ENCODE measurements at regions of chr5 and their contacts with region 1.

Region 1: GRCh38 chr5:179907570-179908324 is at the start of gene TBC1D9B:
- DNase-seq: peak; percentile 78 to 85
- ATAC-seq: peak; percentile 77 to 87 (median 86)
- H3K4me3 ChIP-seq: peak within 1 kb of the TSS; percentile 73
- H3K27ac ChIP-seq: peak within 1 kb of the TSS; percentile 74
- H3K4me1 ChIP-seq: peaks cover 19% of the 10 kb centered on the region
- H3K27me3 ChIP-seq: no peaks in the 10 kb centered on the region
- CTCF ChIP-seq: peak; percentile 81
- total RNA-seq, gene TBC1D9B: 40.0 to 50.2 (median 41.9) TPM

Region 2: GRCh38 chr5:179355976-179356974 is 551.5 kb before region 1 on chr5:
- intact Hi-C with region 1: no loop called
- DNase-seq: no peak
- ATAC-seq: peak in 1 of 4 donors; percentile 71
- H3K4me3 ChIP-seq: no peak overlapping the region
- H3K27ac ChIP-seq: no peak overlapping the region
- H3K4me1 ChIP-seq: no peaks in the 10 kb centered on the region
- H3K27me3 ChIP-seq: no peaks in the 10 kb centered on the region
- CTCF ChIP-seq: no peak

Region 3: GRCh38 chr5:179763215-179763945 is 144.4 kb before region 1 on chr5:
- intact Hi-C with region 1: loop called in 1 of 2 experiments (anchors 5 kb)
- DNase-seq: peak; percentile 47 to 56
- ATAC-seq: peak; percentile 49 to 78 (median 59)
- H3K4me3 ChIP-seq: no peak overlapping the region
- H3K27ac ChIP-seq: peak overlapping the region; percentile 53
- H3K4me1 ChIP-seq: peaks cover 61% of the 10 kb centered on the region
- H3K27me3 ChIP-seq: no peaks in the 10 kb centered on the region
- CTCF ChIP-seq: peak; percentile 86

Region 4: GRCh38 chr5:179806250-179807222 is 101.2 kb before region 1 on chr5 and contains the start of gene MGAT4B:
- intact Hi-C with region 1: loop called (anchors 5 to 10 kb)
- DNase-seq: peak; percentile 79 to 85
- ATAC-seq: peak; percentile 79 to 85 (median 84)
- H3K4me3 ChIP-seq: peak within 1 kb of the TSS; percentile 97
- H3K27ac ChIP-seq: peak within 1 kb of the TSS; percentile 96
- H3K4me1 ChIP-seq: peaks cover 41% of the 10 kb centered on the region
- H3K27me3 ChIP-seq: no peaks in the 10 kb centered on the region
- CTCF ChIP-seq: no peak
- total RNA-seq, gene MGAT4B: 29.3 to 58.4 (median 50.7) TPM

Region 5: DNA sequence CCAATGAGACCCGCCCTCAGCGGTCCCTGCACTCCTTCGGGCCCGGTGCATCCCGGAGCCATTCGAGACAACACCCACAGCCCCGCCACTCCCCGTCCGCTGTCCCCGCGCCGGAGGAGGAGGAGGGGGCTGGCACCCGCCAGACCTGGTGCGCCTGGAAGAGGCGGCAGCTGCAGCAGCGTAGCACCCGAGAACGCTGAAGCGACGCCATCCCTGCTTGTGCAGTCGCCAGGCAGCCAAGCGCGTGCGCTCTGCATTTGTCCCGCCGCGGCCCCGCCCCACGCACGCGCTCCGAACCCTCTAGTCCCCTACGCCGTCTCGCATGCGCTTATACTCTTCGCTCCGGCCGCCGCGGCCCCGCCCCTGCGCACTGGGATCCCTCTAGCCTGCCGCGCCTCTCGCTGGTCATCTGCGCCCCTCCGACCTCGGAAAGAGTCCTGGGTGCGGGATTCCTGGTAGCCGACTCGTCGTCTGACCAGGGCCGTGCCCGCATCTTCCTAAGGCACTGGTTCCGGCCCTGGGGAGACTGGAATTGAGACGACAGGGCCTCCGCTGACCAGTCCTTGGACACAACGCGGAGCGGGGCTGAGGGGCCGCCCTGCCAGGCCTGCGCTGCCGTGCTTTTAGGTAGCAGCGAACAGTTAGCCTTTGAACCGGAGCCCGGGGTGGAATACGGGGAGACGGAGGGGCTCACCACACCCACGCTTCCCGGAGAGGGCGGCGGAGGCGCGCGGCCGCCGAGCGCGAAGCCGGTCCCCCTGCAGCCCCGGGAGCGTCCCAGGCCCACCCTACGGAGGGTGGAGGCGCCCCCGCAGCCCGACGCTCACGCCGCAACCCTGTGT is 48.9 kb before region 1 on chr5 and contains the start of gene MRNIP:
- intact Hi-C with region 1: loop called in 1 of 2 experiments (anchors 5 kb)
- DNase-seq: peak; percentile 98 to 99
- ATAC-seq: peak; percentile 97 to 98 (median 98)
- H3K4me3 ChIP-seq: peak within 1 kb of the TSS; percentile 82
- H3K27ac ChIP-seq: peak within 1 kb of the TSS; percentile 88
- H3K4me1 ChIP-seq: peaks cover 19% of the 10 kb centered on the region
- H3K27me3 ChIP-seq: no peaks in the 10 kb centered on the region
- CTCF ChIP-seq: no peak
- total RNA-seq, gene MRNIP: 2.1 to 7.9 (median 5.1) TPM

Region 6: GRCh38 chr5:179870402-179870903 is 37.3 kb before region 1 on chr5:
- intact Hi-C with region 1: loop called in 1 of 2 experiments (anchors 5 kb)
- DNase-seq: peak; percentile 68 to 80
- ATAC-seq: peak; percentile 85 to 92 (median 86)
- H3K4me3 ChIP-seq: no peak overlapping the region
- H3K27ac ChIP-seq: no peak overlapping the region
- H3K4me1 ChIP-seq: peaks cover 6% of the 10 kb centered on the region
- H3K27me3 ChIP-seq: no peaks in the 10 kb centered on the region
- CTCF ChIP-seq: peak; percentile 51

Region 7: GRCh38 chr5:180071531-180072255 is 163.9 kb after region 1 on chr5 and contains the start of gene RNF130:
- intact Hi-C with region 1: loop called in 1 of 2 experiments (anchors 5 kb)
- DNase-seq: peak; percentile 96 to 97
- ATAC-seq: peak; percentile 95 to 97 (median 96)
- H3K4me3 ChIP-seq: peak within 1 kb of the TSS; percentile 93
- H3K27ac ChIP-seq: peak within 1 kb of the TSS; percentile 95
- H3K4me1 ChIP-seq: peaks cover 19% of the 10 kb centered on the region
- H3K27me3 ChIP-seq: no peaks in the 10 kb centered on the region
- CTCF ChIP-seq: no peak
- total RNA-seq, gene RNF130: 34.1 to 41.1 (median 37.4) TPM